Adrenal gland (tissue), 19 donors: ENCODE measurements at regions of chr20 and their contacts with region 1.

Region 1: DNA sequence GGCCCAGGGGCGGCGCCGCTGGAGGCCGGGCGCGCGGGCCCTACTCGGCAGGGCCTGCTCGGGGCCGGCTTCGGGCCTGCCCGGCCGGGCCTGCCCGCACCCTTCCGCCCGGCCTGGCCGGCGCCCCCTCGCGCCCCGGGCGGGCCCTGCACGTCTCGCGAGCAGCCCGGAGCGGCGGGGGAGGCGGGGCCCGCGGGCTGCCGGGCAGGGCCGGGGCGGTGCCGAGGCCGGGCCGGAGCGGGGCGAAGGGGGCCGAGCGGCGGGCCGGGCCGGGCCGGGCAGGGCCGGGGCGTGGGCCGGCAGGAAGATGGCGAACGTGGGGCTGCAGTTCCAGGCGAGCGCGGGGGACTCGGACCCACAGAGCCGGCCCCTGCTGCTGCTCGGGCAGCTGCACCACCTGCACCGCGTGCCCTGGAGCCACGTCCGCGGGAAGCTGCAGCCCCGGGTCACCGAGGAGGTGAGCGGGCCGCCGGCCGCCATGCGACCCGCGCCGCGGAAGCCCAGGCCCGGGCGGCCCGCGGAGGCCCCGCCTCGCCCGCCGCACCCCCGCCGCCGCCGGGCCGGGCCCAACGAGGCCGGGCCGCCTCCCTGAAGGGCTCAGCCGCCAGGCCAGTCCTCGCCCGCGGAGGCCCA is at the start of gene NPEPL1:
- DNase-seq: peak; percentile 59 to 80 (median 64)
- H3K4me3 ChIP-seq: peak within 1 kb of the TSS in 2 of 4 donors; percentile 19 to 60
- H3K27ac ChIP-seq: peak within 1 kb of the TSS; percentile 3 to 98 (median 86)
- H3K4me1 ChIP-seq: peaks cover 10 to 25% of the 10 kb centered on the region in 2 donors
- H3K27me3 ChIP-seq: no peaks in the 10 kb centered on the region
- CTCF ChIP-seq: peak in 2 of 6 experiments; percentile 24 to 65
- POLR2A ChIP-seq: peak in 1 of 2 donors; percentile 39
- total RNA-seq, gene NPEPL1: 16.1 to 63.5 (median 33.2) TPM

Region 2: GRCh38 chr20:58649286-58650180 is 43.2 kb before region 1 on chr20:
- intact Hi-C with region 1: loop called in 1 of 2 experiments (anchors 5 kb)
- DNase-seq: peak in 3 of 7 donors; percentile 26 to 55 (median 44)
- H3K4me3 ChIP-seq: peak overlapping the region in 3 of 4 donors; percentile 25 to 92 (median 27)
- H3K27ac ChIP-seq: peak overlapping the region in 4 of 5 donors; percentile 80 to 97 (median 94)
- H3K4me1 ChIP-seq: peaks cover 8 to 34% of the 10 kb centered on the region in 2 donors
- H3K27me3 ChIP-seq: no peaks in the 10 kb centered on the region
- CTCF ChIP-seq: no peak
- POLR2A ChIP-seq: no peak